ENCODE measurements at regions of chr3 and their contacts with region 1.

Region 1: DNA sequence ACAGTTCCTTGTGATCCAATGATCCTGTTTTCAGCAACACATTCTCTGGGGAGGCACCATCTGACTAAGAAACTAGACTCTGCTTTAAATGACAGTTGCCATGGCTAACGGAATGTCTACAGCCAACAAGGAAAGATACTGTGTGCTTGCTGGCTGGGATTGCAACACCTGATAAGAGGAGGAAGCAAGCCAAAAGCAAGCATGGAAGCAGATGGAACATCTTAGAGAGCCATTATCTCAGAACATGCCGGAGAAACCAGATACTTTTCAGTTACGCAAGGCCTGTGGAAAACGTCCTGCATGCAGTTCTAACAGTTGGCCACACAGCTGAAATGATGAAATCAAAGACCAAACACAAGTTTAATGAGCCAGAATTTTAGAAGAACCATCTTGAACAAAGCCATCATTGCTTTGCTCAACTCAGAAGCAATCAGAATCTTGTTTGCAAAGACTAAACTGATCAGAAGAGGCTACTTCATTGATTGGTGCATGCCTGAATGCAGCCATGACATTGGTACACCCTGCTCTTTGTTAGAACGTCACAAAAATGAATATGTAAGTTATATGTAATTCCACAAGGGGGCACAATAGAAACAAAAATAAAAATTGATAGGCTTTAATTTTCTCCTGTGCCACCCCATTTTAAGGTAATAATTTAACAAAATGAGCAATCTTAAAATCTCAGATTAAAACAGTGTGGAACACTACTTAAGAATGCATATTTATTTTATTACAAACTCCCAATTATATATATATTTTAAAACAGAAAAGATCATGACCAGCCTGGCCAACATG is 50.8 kb downstream of the GXYLT2 start:
- DNase-seq: peak in 1 of 3 donors; percentile 54
- ATAC-seq: peak; percentile 92 to 96 (median 94)
- H3K4me3 ChIP-seq: no peak overlapping the region
- H3K27ac ChIP-seq: peak overlapping the region in 1 of 3 donors; percentile 26
- H3K4me1 ChIP-seq: peaks cover 0 to 4% (median 0%) of the 10 kb centered on the region in 4 donors
- H3K27me3 ChIP-seq: no peaks in the 10 kb centered on the region
- CTCF ChIP-seq: peak; percentile 54 to 96 (median 58)
- POLR2A ChIP-seq: no peak

Region 2: DNA sequence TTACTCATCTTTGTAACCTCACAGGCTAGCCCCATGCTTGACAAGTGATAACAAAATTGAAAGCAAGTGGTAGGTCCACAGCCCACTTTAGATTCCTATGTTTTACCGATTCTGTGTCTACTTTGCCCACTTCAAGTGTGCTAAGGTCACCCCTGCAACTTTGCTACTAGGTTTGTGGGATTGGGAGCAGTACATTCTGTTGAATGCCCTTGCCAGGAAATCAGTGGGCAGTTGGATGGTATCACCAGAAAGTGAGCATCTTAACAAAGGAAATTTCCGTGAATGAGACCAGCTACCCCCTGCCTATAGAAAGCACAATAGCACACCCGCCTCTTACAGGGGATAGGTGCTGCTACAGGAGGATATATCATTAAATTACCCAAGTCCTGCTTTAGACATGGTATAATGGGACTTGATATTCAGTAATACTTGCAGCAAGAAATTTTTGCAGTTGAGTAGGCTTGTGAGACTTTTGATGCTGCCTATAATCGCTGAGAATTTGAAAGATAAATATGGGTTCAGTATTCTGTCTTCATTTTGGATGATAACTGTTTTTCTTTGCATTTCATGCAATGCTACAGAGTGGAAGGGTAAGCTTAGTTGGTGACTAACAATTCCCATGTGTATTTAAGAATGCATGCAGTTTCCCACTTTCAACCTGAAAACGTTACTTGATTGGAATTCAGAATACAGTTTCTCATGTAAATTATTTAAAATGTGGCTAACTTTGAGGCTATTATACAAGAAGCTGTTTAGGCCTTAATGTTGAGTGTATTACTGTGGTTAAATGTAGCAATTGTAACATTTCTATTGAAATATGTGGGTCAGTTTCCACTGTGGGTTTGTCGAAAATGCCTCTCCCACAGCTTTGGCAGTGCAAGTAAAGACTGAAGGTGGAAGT is 132.3 kb after region 1 on chr3:
- intact Hi-C with region 1: loop called (anchors 10 kb)
- DNase-seq: no peak
- ATAC-seq: no peak
- H3K4me3 ChIP-seq: no peak overlapping the region
- H3K27ac ChIP-seq: no peak overlapping the region
- H3K4me1 ChIP-seq: no peaks in the 10 kb centered on the region
- H3K27me3 ChIP-seq: no peaks in the 10 kb centered on the region
- CTCF ChIP-seq: no peak
- POLR2A ChIP-seq: no peak

Measured in right lobe of liver (tissue), 6 donors.